Aorta (tissue), 5 donors: ENCODE measurements at regions of chr10 and their contacts with region 1.

Region 1: DNA sequence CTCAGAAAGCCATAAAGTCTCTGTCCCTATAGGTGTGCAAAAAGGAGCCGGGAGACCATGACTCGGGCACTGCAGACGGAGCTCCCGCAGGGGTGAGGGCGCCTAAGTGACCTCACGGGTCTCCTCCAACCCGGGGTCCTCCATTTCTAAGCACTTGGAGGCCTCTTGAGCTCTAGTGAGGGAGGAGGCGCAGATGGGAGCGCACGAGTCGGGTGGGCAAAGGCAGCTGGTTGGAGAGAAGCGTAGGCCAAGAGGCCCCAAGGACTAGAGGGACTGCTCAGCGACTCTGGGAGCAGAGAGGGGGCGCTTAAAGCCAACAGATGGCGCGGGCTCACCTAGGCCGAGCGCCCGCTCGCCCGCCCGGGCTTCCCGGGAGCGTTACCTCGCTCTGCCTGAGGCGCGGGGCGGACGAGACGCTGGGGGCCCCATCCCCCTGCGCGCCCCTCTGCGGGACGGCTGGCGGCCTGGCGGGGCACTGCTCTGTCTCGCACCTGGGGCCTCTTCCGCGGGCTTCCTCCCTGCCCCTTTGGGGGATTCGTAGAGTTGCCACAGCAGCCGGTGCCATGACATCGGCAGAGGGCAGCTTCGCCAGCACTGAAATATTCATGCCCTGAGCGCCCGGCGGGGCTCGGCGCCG is 518 bp upstream of the CDH23 start:
- DNase-seq: peak in 1 of 2 donors; percentile 81
- ATAC-seq: peak; percentile 75
- H3K4me3 ChIP-seq: peak overlapping the region; percentile 58 to 59
- H3K27ac ChIP-seq: no peak overlapping the region
- H3K4me1 ChIP-seq: no peaks in the 10 kb centered on the region
- H3K27me3 ChIP-seq: no peaks in the 10 kb centered on the region

Region 2: GRCh38 chr10:71623098-71623985 is 227.1 kb after region 1 on chr10:
- intact Hi-C with region 1: loop called in 1 of 2 experiments (anchors 10 kb)
- DNase-seq: no peak
- ATAC-seq: no peak
- H3K4me3 ChIP-seq: no peak overlapping the region
- H3K27ac ChIP-seq: no peak overlapping the region
- H3K4me1 ChIP-seq: peaks cover 0 to 1% of the 10 kb centered on the region in 2 donors
- H3K27me3 ChIP-seq: no peaks in the 10 kb centered on the region